Naive thymus-derived CD8-positive, alpha-beta T cell (primary cell): ENCODE measurements at regions of chr4 and their contacts with region 1.

Region 1: GRCh38 chr4:40199999-40200874 is 3.4 kb downstream of the RHOH start:
- DNase-seq: peak in 8 of 10 donors; percentile 45 to 78 (median 68)
- ATAC-seq: peak; percentile 13 to 18
- H3K4me3 Mint-ChIP-seq: peak overlapping the region; percentile 94 to 100 (median 98)
- H3K27ac Mint-ChIP-seq: peak overlapping the region; percentile 94 to 100 (median 99)
- H3K4me1 Mint-ChIP-seq: peaks cover 34 to 71% (median 56%) of the 10 kb centered on the region in 4 donors
- H3K27me3 Mint-ChIP-seq: no peaks in the 10 kb centered on the region

Region 2: DNA sequence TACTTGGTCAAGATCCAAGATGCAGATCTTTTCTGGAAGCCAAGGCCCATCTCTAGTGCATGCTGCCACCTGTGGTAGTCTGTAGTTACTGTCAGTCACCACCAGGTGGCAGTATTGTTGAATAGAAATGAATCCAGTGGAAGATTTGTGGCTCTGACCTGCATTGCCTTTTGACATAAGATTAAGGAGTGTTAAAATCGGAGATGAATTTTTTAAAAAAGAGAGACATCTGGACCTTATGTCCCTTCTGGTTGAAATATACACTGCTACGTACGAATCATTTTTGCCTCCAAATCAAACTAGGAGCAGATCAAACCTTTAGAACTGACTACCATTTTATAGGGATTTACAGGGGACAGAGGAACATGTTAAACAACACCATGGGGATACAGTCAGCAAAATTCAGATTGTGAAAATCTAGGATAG is 50.3 kb before region 1 on chr4:
- POLR2A ChIA-PET with region 1: interaction called, 29 read pairs
- DNase-seq: peak; percentile 33 to 87 (median 77)
- ATAC-seq: peak; percentile 85 to 90
- H3K4me3 Mint-ChIP-seq: peak overlapping the region in 6 of 10 donors; percentile 1 to 56 (median 31)
- H3K27ac Mint-ChIP-seq: peak overlapping the region; percentile 69 to 91 (median 88)
- H3K4me1 Mint-ChIP-seq: peaks cover 14 to 45% (median 38%) of the 10 kb centered on the region in 4 donors
- H3K27me3 Mint-ChIP-seq: no peaks in the 10 kb centered on the region

Region 3: GRCh38 chr4:40212674-40213527 is 12.7 kb after region 1 on chr4:
- POLR2A ChIA-PET with region 1: interaction called, 376 read pairs
- DNase-seq: no peak
- ATAC-seq: no peak
- H3K4me3 Mint-ChIP-seq: peak overlapping the region; percentile 55 to 100 (median 78)
- H3K27ac Mint-ChIP-seq: peak overlapping the region; percentile 87 to 98 (median 96)
- H3K4me1 Mint-ChIP-seq: peaks cover 51 to 99% (median 94%) of the 10 kb centered on the region in 4 donors
- H3K27me3 Mint-ChIP-seq: no peaks in the 10 kb centered on the region

Region 4: GRCh38 chr4:40238700-40239548 is 38.7 kb after region 1 on chr4:
- POLR2A ChIA-PET with region 1: interaction called, 376 read pairs
- DNase-seq: peak; percentile 32 to 91 (median 78)
- ATAC-seq: peak; percentile 76 to 92
- H3K4me3 Mint-ChIP-seq: peak overlapping the region; percentile 70 to 89 (median 78)
- H3K27ac Mint-ChIP-seq: peak overlapping the region; percentile 92 to 99 (median 97)
- H3K4me1 Mint-ChIP-seq: peaks cover 43 to 93% (median 91%) of the 10 kb centered on the region in 4 donors
- H3K27me3 Mint-ChIP-seq: no peaks in the 10 kb centered on the region

Region 5: DNA sequence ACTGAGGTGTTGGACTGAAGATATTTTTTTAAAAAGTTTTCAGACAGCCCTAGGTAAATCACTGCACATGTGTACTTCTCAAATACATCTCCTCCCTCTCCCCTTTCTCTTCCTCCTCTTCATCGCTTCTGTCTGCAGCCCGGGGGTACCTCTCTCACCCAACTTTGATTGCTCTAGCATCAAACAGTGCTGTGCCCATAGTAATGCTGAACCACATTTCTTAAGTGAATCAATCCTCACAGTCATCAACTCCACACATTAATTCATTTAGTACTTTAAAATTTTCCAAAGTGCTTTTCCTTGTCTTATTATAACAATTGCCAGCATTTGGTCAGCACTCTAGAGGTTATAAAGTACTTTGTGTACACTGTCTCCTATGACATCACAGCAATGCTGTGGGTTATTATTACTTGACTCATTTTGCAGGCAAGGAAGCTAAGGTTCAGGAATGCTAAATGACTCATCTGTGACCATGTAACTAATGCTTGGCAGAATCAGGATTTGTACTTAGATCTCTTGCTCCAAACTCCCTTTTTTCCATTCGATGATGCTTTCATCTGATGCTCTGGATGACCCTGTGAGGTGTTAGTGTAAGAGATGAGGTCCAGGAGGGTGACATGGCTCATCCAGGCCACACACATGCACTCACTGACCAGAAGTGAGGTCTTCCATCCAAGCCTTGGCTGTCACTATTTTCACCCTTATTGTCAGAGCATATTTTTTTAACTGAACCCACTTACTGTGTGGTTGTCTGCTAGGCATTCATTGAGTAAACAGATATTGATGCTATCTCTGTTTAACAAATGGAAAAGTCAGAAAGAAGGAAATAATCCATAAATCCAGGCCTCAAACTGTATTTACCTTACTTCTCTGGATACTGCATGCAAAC is 55.4 kb after region 1 on chr4:
- POLR2A ChIA-PET with region 1: interaction called, 12 read pairs
- DNase-seq: no peak
- ATAC-seq: peak; percentile 22 to 27
- H3K4me3 Mint-ChIP-seq: peak overlapping the region; percentile 16 to 78 (median 62)
- H3K27ac Mint-ChIP-seq: peak overlapping the region; percentile 84 to 97 (median 94)
- H3K4me1 Mint-ChIP-seq: peaks cover 39 to 77% (median 70%) of the 10 kb centered on the region in 4 donors
- H3K27me3 Mint-ChIP-seq: no peaks in the 10 kb centered on the region

Region 6: GRCh38 chr4:40301603-40302002 is 101.4 kb after region 1 on chr4:
- POLR2A ChIA-PET with region 1: interaction called, 68 read pairs
- DNase-seq: peak; percentile 49 to 93 (median 78)
- ATAC-seq: peak; percentile 83 to 89
- H3K4me3 Mint-ChIP-seq: peak overlapping the region; percentile 31 to 84 (median 74)
- H3K27ac Mint-ChIP-seq: peak overlapping the region; percentile 82 to 100 (median 98)
- H3K4me1 Mint-ChIP-seq: peaks cover 43 to 90% (median 84%) of the 10 kb centered on the region in 4 donors
- H3K27me3 Mint-ChIP-seq: no peaks in the 10 kb centered on the region